Activated B cell treated with CpG ODN at 0.5 μM for 24 hours (primary cell): ENCODE measurements at regions of chr10 and their contacts with region 1.

Region 1: GRCh38 chr10:30456266-30456665 is 22.3 kb downstream of the MAP3K8 start:
- DNase-seq: no peak
- ATAC-seq: peak; percentile 63
- H3K4me3 Mint-ChIP-seq: peak overlapping the region; percentile 53
- H3K27ac Mint-ChIP-seq: peak overlapping the region; percentile 81
- H3K4me1 Mint-ChIP-seq: peaks cover 46% of the 10 kb centered on the region
- H3K27me3 Mint-ChIP-seq: no peaks in the 10 kb centered on the region
- CTCF ChIP-seq: no peak

Region 2: GRCh38 chr10:30134171-30134945 is 321.9 kb before region 1 on chr10:
- CTCF ChIA-PET with region 1: no interaction called
- POLR2A ChIA-PET with region 1: no interaction called
- intact Hi-C with region 1: no loop called
- DNase-seq: no peak
- ATAC-seq: no peak
- H3K4me3 Mint-ChIP-seq: no peak overlapping the region
- H3K27ac Mint-ChIP-seq: no peak overlapping the region
- H3K4me1 Mint-ChIP-seq: no peaks in the 10 kb centered on the region
- H3K27me3 Mint-ChIP-seq: no peaks in the 10 kb centered on the region
- CTCF ChIP-seq: no peak

Region 3: GRCh38 chr10:30534465-30535144 is 78.3 kb after region 1 on chr10:
- CTCF ChIA-PET with region 1: interaction called, 20 read pairs
- POLR2A ChIA-PET with region 1: interaction called, 23 read pairs
- intact Hi-C with region 1: loop called (anchors 1 kb)
- DNase-seq: peak; percentile 40
- ATAC-seq: peak; percentile 45
- H3K4me3 Mint-ChIP-seq: no peak overlapping the region
- H3K27ac Mint-ChIP-seq: peak overlapping the region; percentile 69
- H3K4me1 Mint-ChIP-seq: peaks cover 42% of the 10 kb centered on the region
- H3K27me3 Mint-ChIP-seq: no peaks in the 10 kb centered on the region
- CTCF ChIP-seq: peak; percentile 57